Ascending aorta (tissue), 2 donors: ENCODE measurements at regions of chr17 and their contacts with region 1.

Region 1: GRCh38 chr17:28318759-28319660 is at the start of gene TMEM97:
- DNase-seq: peak; percentile 87 to 97
- H3K4me3 ChIP-seq: peak within 1 kb of the TSS; percentile 67 to 72
- H3K27ac ChIP-seq: peak within 1 kb of the TSS; percentile 12 to 51
- H3K4me1 ChIP-seq: peaks cover 5 to 13% of the 10 kb centered on the region in 2 donors
- H3K27me3 ChIP-seq: no peaks in the 10 kb centered on the region
- CTCF ChIP-seq: no peak
- total RNA-seq, gene TMEM97: not detected

Region 2: DNA sequence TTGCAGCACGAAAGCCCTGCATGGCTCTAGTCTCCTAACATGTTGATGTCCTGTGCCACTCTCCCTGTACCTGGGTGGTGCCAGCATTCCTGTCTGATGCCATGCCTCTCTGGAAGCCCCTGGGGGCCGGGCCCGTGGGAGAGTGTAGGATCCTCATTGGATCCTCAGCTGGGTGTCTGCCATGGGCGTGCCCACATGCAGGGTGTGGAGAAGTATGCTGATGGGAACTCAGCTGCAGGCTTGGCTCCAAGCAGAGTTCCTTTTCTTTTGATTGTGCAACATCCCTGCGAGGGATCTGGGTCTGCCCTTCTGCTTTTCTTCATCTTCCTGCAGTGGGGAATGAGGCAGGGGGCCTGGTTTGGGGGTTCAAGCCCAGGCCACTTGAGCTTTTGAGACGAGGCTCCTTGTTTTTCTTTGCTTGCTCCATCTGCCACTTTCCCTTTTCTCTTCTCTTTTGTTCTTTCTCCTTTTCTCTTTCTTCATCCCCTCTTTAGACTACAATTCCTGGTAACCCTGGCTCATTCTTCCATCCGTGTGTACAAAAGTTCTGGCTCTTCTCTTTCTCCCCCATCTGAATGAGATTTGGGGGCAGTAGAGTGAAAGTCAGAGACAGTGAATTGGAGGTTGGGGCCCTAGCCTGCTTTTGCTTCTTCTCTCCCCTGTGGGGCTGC is 829.8 kb before region 1 on chr17:
- intact Hi-C with region 1: no loop called
- DNase-seq: peak; percentile 30 to 84
- H3K4me3 ChIP-seq: no peak overlapping the region
- H3K27ac ChIP-seq: peak overlapping the region; percentile 15 to 42
- H3K4me1 ChIP-seq: peaks cover 0 to 10% of the 10 kb centered on the region in 2 donors
- H3K27me3 ChIP-seq: no peaks in the 10 kb centered on the region
- CTCF ChIP-seq: no peak

Region 3: DNA sequence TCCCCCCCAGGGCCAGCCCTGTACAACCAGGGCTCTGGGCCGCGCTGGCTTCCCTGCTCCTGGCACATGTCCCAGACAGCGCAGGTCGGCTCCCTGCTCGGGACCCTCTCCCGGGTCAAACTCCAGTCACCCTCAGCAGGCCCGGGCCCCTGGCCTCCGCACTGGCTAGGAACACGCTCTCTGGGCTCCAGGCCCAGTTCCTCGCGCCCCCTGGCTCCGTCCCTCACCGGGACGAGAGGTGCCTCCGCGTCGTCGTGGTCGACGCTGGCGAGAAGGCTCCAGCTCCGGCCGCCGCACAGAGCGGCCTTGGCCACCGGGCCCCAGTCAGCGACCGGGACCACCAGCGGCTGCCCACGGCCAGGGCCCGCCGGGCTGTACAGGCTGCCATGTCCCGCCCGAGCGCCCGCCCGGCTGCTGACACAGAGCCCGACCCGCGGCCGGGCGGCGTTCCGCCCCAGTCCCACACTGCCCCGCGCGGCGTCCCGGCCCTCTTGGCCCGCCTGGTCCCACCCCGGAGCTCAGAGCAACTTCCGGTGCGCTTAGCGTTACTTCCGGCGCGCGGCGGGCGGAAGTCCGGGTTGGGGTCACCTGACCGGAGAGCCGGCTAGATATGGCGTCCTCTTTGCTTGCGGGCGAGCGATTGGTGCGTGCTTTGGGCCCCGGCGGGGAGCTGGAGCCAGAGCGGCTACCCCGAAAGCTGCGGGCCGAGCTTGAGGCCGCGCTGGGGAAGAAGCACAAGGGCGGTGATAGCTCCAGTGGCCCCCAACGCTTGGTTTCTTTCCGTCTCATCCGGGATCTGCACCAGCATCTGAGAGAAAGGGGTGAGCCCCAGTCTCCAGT is 38.3 kb after region 1 on chr17 and contains the start of gene POLDIP2:
- intact Hi-C with region 1: loop called (anchors 1 kb)
- DNase-seq: peak; percentile 75 to 97
- H3K4me3 ChIP-seq: peak within 1 kb of the TSS; percentile 93 to 99
- H3K27ac ChIP-seq: peak within 1 kb of the TSS; percentile 92 to 95
- H3K4me1 ChIP-seq: peaks cover 3 to 17% of the 10 kb centered on the region in 2 donors
- H3K27me3 ChIP-seq: no peaks in the 10 kb centered on the region
- CTCF ChIP-seq: peak in 1 of 3 experiments; percentile 14
- total RNA-seq, gene POLDIP2: 82.2 TPM